ENCODE measurements at regions of chr3 and their contacts with region 1.

Region 1: DNA sequence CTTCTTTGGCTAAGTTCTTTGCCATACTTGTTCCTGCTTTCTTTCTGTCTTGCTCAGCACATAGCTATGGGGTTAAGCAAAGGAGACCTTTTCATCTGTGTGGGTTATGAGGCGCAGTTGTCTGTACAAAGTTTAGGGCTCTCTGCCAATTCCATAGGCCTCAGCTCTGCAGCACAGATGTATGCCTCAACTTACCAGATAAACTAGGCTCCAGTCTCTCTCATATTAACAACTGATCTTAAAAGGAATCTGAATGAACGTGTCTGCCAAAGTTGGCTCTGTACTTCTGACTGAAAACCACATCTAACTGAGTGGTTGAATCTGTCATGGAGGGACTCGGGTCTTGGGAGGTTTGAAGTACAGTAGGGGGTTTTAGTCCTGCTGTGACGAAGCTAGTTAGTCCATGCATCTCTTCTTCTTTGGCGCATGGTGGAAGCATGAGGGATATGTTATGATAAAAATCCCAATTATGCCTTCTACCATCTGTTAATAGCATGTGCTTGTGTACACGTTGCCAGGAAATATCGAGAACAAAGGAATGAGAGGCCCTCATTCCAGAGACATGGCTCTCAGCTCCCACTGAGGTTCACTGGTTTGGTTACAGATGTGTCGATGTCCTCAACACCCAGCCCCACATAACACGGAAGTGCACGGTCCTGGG is 114.6 kb upstream of the TSC22D2 start:
- DNase-seq: peak; percentile 85
- H3K4me3 ChIP-seq: no peak overlapping the region
- CTCF ChIP-seq: no peak

Region 2: DNA sequence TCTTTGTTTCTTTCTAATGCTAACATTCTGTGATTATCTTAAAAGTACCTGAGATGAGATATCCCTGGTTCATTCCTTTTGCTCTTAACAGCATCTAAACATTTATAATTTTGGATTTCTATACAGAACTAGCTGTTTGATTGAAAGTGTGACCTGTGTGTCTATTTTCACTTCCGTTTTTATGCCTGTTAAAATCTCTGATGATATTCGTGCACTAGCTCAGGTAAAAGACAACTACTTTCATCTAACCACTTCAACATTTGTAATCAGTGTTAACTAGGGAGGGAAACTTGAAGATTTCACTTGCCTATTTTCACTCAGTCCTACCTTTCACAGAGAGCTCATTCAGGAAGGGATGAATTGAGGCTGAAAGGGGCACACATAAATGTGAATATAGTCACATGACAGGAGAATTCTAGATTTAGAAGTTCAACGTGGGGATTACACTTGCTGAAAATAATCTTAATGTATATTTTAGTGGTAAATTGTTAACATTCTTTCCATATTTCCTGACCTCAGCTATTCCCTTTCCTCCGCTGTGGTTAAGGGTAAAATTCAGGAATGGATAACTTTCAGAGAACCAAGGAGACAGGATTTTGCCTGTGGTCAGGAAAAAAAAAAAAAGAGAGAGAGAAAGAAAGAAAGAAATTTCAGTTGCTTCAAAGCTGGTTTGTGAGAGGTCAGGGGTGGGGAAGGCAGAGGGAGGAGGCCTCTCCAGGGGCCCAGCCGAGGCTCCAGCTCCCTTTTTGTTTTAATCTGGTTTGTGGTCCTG is 45.2 kb before region 1 on chr3:
- in situ Hi-C with region 1: loop called (anchors 10 kb)
- DNase-seq: peak; percentile 95
- H3K4me3 ChIP-seq: no peak overlapping the region
- CTCF ChIP-seq: no peak

Region 3: DNA sequence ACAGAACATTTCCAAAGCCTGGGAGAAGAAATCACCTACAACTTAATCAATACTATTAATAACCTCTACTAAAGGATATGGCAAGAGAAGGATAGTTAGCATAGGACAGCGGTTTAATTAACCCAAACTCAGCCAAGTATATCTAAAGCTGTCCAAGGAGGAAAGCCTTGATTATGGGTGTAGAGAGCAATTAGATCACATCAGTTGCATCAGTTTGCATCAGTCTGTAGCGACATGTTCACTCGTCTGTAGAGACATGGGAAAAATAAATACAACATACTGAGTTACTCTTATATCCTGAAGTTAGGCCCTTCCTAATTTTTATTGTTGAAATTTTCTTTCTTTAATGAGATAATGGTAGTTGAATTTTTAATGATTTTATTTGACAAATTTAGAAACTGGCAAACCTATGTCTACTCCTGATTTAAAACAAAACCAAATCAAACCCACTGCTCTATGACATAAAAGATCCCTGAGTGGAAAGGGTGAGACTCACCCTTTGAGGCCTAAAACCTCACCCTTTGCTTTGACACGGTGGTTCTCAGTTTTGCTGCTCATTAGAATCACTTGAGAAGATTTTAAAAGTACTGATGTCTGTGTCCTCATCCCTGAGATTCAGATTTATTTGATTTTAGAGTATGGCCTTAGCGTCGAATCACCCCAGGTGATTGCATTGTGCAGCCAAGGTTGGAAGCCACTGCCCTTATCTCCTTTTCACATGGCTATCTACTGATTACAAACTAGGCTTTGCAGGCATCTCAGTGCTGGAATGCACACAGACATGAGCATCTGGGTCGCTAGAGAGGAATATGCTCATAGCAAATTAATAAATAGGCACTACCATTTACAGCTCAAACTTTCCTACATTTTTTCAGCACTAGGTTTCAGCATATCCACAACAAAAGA is 681.8 kb after region 1 on chr3:
- in situ Hi-C with region 1: no loop called
- DNase-seq: no peak
- H3K4me3 ChIP-seq: no peak overlapping the region
- CTCF ChIP-seq: no peak

Region 4: DNA sequence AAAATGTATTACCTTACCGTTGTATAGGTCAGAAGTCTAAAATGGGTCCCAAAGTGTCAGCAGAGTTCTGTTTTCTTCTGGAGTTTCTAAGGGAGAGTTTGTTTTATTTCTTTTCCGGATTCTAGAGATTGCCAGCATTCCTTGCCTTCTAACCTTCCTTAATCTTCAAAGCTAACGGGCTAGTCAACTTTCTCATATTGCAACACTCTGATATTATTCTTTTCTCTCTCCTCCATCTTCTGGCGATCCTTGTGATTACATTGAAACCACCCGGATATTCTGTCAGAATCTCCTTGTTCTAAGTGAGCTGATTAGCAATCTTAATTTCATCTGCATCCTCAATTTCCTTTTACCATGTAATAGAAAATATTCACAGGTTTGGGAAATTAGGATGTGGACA is 1404.0 kb after region 1 on chr3:
- in situ Hi-C with region 1: no loop called
- DNase-seq: no peak
- H3K4me3 ChIP-seq: no peak overlapping the region
- CTCF ChIP-seq: no peak

Measured in astrocyte of the spinal cord (primary cell).